ENCODE measurements at regions of chr20 and their contacts with region 1.

Region 1: GRCh38 chr20:44310664-44311639 is at the start of gene FITM2:
- DNase-seq: peak; percentile 99
- H3K4me3 ChIP-seq: peak within 1 kb of the TSS; percentile 81 to 92
- H3K27ac ChIP-seq: peak within 1 kb of the TSS in 1 of 2 experiments; percentile 68; a peak in 1 of 4 replicates
- H3K4me1 ChIP-seq: peaks cover 4 to 10% of the 10 kb centered on the region in 2 experiments; a peak in 1 of 4 replicates
- H3K27me3 ChIP-seq: no peaks in the 10 kb centered on the region
- CTCF ChIP-seq: peak; percentile 87
- EP300 ChIP-seq: no peak
- RAD21 ChIP-seq: peak; percentile 84
- polyA plus RNA-seq, gene FITM2: 2.8 and 3.6 TPM in 2 replicates

Region 2: DNA sequence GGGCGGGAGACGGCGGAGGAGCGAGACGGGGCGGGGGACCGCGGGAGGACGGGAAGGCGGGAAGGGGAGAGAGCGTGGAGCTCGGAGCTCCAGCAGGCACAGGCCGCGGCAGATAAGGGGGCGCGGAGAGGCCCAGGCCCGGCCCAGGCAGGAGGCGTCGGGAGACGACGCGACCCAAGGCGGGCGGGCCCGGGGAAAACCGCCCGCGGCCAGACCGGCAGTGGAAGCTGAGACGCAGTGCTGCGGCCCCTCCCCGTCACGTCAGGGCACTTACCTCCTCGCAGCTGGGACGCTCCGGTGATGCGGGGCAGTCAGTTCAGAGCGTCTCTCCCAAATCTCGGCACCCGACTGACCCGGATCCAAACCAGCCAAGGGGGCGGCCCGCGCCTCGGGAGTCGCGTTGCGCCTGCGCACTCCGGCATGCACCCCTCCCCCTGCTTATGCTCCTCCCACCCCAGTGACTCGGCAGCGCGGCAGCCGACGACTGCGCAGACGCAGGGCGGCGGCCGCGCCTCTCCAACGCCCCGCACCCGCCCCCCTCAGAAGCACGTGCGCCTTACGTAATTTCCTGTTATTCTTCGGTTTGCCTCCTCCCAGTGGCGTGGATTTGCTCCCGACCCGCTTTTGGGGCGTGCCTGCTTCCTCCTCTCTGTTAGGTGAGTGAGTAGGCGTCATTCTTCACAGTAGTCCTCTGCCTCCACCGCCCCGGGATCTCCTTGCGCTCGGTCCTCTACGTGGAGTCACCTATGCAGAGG is 100.4 kb before region 1 on chr20 and contains the start of gene OSER1:
- CTCF ChIA-PET with region 1: interaction called, 264 read pairs
- POLR2A ChIA-PET with region 1: no interaction called
- DNase-seq: peak; percentile 100
- H3K4me3 ChIP-seq: peak within 1 kb of the TSS; percentile 92 to 97
- H3K27ac ChIP-seq: peak within 1 kb of the TSS; percentile 84 to 92
- H3K4me1 ChIP-seq: peaks cover 5 to 19% of the 10 kb centered on the region in 2 experiments; a peak in 3 of 4 replicates
- H3K27me3 ChIP-seq: no peaks in the 10 kb centered on the region
- CTCF ChIP-seq: no peak
- EP300 ChIP-seq: peak in 1 of 2 experiments; percentile 23; a peak in 1 of 4 replicates
- RAD21 ChIP-seq: no peak
- polyA plus RNA-seq, gene OSER1: 22.3 and 31.0 TPM in 2 replicates

Region 3: GRCh38 chr20:44231713-44232468 is 79.1 kb before region 1 on chr20:
- CTCF ChIA-PET with region 1: interaction called, 17 read pairs
- POLR2A ChIA-PET with region 1: no interaction called
- DNase-seq: no peak
- H3K4me3 ChIP-seq: no peak overlapping the region
- H3K27ac ChIP-seq: no peak overlapping the region
- H3K4me1 ChIP-seq: no peaks in the 10 kb centered on the region
- H3K27me3 ChIP-seq: no peaks in the 10 kb centered on the region
- CTCF ChIP-seq: no peak
- EP300 ChIP-seq: no peak
- RAD21 ChIP-seq: peak; percentile 17; the same call in 1 of the 2 replicates

Region 4: GRCh38 chr20:44253528-44253927 is 57.4 kb before region 1 on chr20:
- CTCF ChIA-PET with region 1: interaction called, 18 read pairs
- POLR2A ChIA-PET with region 1: no interaction called
- DNase-seq: peak; percentile 55
- H3K4me3 ChIP-seq: no peak overlapping the region
- H3K27ac ChIP-seq: no peak overlapping the region
- H3K4me1 ChIP-seq: no peaks in the 10 kb centered on the region
- H3K27me3 ChIP-seq: no peaks in the 10 kb centered on the region
- CTCF ChIP-seq: no peak; the same call in 1 of the 2 replicates
- EP300 ChIP-seq: no peak
- RAD21 ChIP-seq: no peak

Region 5: GRCh38 chr20:44326391-44327159 is 15.6 kb after region 1 on chr20:
- CTCF ChIA-PET with region 1: interaction called, 17 read pairs
- POLR2A ChIA-PET with region 1: no interaction called
- DNase-seq: peak; percentile 52
- H3K4me3 ChIP-seq: no peak overlapping the region
- H3K27ac ChIP-seq: no peak overlapping the region
- H3K4me1 ChIP-seq: no peaks in the 10 kb centered on the region
- H3K27me3 ChIP-seq: no peaks in the 10 kb centered on the region
- CTCF ChIP-seq: no peak
- EP300 ChIP-seq: no peak
- RAD21 ChIP-seq: no peak

Region 6: GRCh38 chr20:44388466-44389023 is 77.6 kb after region 1 on chr20:
- CTCF ChIA-PET with region 1: interaction called, 14 read pairs
- POLR2A ChIA-PET with region 1: no interaction called
- DNase-seq: peak; percentile 85
- H3K4me3 ChIP-seq: no peak overlapping the region
- H3K27ac ChIP-seq: no peak overlapping the region
- H3K4me1 ChIP-seq: peaks cover 0 to 2% of the 10 kb centered on the region in 2 experiments; a peak in 1 of 4 replicates
- H3K27me3 ChIP-seq: no peaks in the 10 kb centered on the region; the same call in 1 of the 2 replicates
- CTCF ChIP-seq: peak; percentile 76
- EP300 ChIP-seq: no peak
- RAD21 ChIP-seq: peak; percentile 80

Region 7: DNA sequence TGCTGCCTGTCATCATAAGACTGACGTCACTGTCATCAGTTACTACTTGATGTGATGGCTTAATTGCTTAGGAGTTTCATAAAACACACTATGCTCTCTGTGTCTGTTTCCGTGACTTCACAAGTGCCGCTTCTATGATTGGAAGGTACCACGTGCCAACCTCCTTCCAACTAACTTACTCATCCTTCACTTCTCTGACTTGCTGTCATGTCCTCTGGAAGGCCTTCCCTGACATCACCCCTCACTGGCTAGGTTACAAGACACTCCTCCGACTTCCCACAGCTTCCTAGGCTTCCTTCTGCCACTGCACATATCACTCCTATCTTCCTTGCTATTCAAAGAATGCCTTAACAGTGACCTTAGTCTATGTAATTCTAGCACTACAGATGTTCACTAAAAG is 190.5 kb after region 1 on chr20:
- CTCF ChIA-PET with region 1: no interaction called
- POLR2A ChIA-PET with region 1: no interaction called
- DNase-seq: no peak
- H3K4me3 ChIP-seq: no peak overlapping the region
- H3K27ac ChIP-seq: peak overlapping the region in 1 of 2 experiments; percentile 56; a peak in 2 of 4 replicates
- H3K4me1 ChIP-seq: peaks cover 0 to 15% of the 10 kb centered on the region in 2 experiments; a peak in 2 of 4 replicates
- H3K27me3 ChIP-seq: no peaks in the 10 kb centered on the region
- CTCF ChIP-seq: no peak
- EP300 ChIP-seq: no peak
- RAD21 ChIP-seq: no peak

Measured in SK-N-SH (cell line).